IMR-90 (cell line): ENCODE measurements at regions of chr7 and their contacts with region 1.

Region 1: DNA sequence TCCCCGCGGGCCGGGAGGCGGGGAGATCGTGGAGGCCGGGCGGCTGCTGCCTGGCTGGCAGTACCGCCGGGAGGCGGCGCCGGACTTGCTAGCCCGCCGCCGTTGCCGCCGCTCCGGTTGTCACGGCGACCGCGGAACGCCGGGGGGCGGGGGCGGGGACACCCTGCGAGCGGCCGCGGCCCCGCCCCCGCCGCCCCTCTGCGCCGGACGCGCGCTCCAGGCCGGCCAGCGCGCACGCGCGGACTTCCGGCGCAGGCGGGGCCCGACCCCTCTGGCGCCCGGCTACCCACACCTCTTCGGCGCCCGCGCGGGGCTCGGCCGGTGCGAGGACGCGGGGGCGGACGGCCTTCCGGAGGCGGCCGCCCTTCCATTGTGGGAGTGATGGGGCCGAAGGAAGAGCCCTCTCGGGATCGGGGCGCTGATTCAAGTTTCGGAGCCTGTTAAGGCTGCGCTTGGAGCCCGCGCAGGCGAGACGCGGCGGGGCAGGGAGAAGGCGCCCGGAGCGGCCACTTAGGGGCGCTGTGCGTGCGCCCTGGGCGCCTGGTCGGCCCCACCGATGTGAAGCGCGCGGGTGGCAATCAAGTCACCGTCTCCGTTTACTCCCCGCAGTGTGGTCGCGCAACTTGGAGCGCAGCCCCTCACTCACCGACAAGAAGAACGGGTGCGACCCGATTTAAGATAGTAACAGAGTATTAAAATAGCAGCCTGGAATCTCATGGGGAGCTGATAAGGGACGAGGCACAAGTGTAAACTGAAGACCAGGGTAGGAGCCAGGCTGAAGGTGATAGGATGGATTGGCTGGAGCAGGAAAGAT is 448 bp upstream of the DPY19L1 start:
- DNase-seq: peak; percentile 94
- ATAC-seq: peak; percentile 93
- H3K4me3 ChIP-seq: peak overlapping the region; percentile 87
- H3K27ac ChIP-seq: peak overlapping the region; percentile 72
- H3K4me1 ChIP-seq: peaks cover 2% of the 10 kb centered on the region; the same call in 1 of the 2 replicates
- H3K27me3 ChIP-seq: peaks cover 4% of the 10 kb centered on the region; the same call in 1 of the 2 replicates
- CTCF ChIP-seq: peak; percentile 85
- POLR2A ChIP-seq: 0 out of 2 replicates have a peak, but pooled peaks have one; percentile 36
- RAD21 ChIP-seq: peak; percentile 61

Region 2: GRCh38 chr7:34315032-34315431 is 722.7 kb before region 1 on chr7:
- CTCF ChIA-PET with region 1: no interaction called
- POLR2A ChIA-PET with region 1: no interaction called
- dilution Hi-C with region 1: no loop called
- in situ Hi-C with region 1: no loop called
- intact Hi-C with region 1: loop called (anchors 10 kb)
- DNase-seq: peak; percentile 83
- ATAC-seq: peak; percentile 78
- H3K4me3 ChIP-seq: no peak overlapping the region
- H3K27ac ChIP-seq: peak overlapping the region; percentile 43; the same call in 1 of the 2 replicates
- H3K4me1 ChIP-seq: peaks cover 7% of the 10 kb centered on the region; the same call in 1 of the 2 replicates
- H3K27me3 ChIP-seq: no peaks in the 10 kb centered on the region
- CTCF ChIP-seq: no peak
- POLR2A ChIP-seq: no peak
- RAD21 ChIP-seq: no peak

Region 3: DNA sequence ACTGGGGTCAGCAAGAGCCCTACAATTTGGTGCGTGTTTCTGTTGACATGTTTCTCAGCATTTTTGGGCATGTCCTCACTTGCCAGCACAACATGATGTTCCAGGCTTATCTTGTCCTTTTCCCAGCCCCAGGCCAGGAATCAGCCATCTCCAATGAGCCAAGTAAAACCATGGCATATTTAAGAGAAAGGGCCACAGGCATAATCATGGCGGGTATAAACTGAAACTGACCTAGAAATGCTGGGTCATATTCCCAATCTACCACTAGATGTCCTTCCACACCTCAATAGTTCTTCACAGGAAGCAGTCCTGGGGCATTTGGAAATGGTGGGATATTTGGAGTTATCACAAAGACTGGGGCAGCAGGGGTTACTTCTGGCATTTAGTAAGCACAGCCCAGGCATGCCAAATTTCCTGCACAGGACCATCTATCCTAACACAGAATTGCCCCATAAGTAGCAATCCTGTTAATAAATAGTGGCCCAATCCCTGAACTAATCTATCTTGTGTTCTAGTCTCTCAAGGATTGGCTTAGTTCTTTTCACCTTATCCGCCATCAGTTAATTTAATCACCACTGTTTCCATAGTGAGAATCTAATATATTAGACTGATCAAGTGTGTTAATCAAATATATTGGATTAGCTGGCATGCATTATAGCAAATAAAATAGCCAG is 278.1 kb before region 1 on chr7:
- CTCF ChIA-PET with region 1: no interaction called
- POLR2A ChIA-PET with region 1: no interaction called
- dilution Hi-C with region 1: no loop called
- in situ Hi-C with region 1: no loop called
- intact Hi-C with region 1: loop called (anchors 5 kb)
- DNase-seq: peak; percentile 45
- ATAC-seq: peak; percentile 88
- H3K4me3 ChIP-seq: no peak overlapping the region
- H3K27ac ChIP-seq: no peak overlapping the region
- H3K4me1 ChIP-seq: no peaks in the 10 kb centered on the region
- H3K27me3 ChIP-seq: no peaks in the 10 kb centered on the region
- CTCF ChIP-seq: peak; percentile 57
- POLR2A ChIP-seq: no peak
- RAD21 ChIP-seq: peak; percentile 44

Region 4: GRCh38 chr7:34823640-34824258 is 214.0 kb before region 1 on chr7:
- CTCF ChIA-PET with region 1: interaction called, 4 read pairs
- POLR2A ChIA-PET with region 1: interaction called, 8 read pairs
- dilution Hi-C with region 1: no loop called
- in situ Hi-C with region 1: no loop called
- intact Hi-C with region 1: loop called (anchors 1 kb)
- DNase-seq: peak; percentile 46
- ATAC-seq: peak; percentile 82
- H3K4me3 ChIP-seq: no peak overlapping the region
- H3K27ac ChIP-seq: no peak overlapping the region
- H3K4me1 ChIP-seq: no peaks in the 10 kb centered on the region
- H3K27me3 ChIP-seq: no peaks in the 10 kb centered on the region; the same call in 1 of the 2 replicates
- CTCF ChIP-seq: peak; percentile 80
- POLR2A ChIP-seq: no peak
- RAD21 ChIP-seq: peak; percentile 69

Region 5: GRCh38 chr7:34939175-34939574 is 98.6 kb before region 1 on chr7:
- CTCF ChIA-PET with region 1: interaction called, 3 read pairs
- POLR2A ChIA-PET with region 1: no interaction called
- dilution Hi-C with region 1: no loop called
- in situ Hi-C with region 1: no loop called
- intact Hi-C with region 1: loop called (anchors 5 kb)
- DNase-seq: peak; percentile 94
- ATAC-seq: peak; percentile 94
- H3K4me3 ChIP-seq: no peak overlapping the region
- H3K27ac ChIP-seq: no peak overlapping the region
- H3K4me1 ChIP-seq: peaks cover 1% of the 10 kb centered on the region; the same call in 1 of the 2 replicates
- H3K27me3 ChIP-seq: no peaks in the 10 kb centered on the region
- CTCF ChIP-seq: no peak
- POLR2A ChIP-seq: no peak
- RAD21 ChIP-seq: no peak

Region 6: DNA sequence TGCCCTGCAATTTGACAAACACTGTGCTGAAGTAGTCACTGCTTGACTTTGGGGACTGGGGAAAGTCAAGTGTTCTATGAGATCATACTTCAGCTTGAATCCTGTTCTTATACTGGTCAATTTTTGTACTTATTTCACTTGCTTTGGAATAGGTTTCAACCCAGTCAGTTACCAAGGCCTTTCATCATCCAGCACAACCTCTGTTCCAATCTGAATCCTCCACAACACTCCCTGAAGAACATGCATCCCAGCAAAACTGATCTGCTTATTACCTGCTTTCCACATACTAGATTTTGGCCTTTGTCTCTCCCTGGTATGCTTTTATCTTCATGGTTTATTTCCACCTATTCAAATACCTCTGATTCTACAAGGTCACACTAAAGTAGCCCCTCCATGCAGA is 30.0 kb before region 1 on chr7:
- CTCF ChIA-PET with region 1: no interaction called
- POLR2A ChIA-PET with region 1: no interaction called
- dilution Hi-C with region 1: no loop called
- in situ Hi-C with region 1: no loop called
- intact Hi-C with region 1: no loop called
- DNase-seq: no peak
- ATAC-seq: no peak
- H3K4me3 ChIP-seq: no peak overlapping the region
- H3K27ac ChIP-seq: no peak overlapping the region
- H3K4me1 ChIP-seq: peaks cover 10% of the 10 kb centered on the region
- H3K27me3 ChIP-seq: no peaks in the 10 kb centered on the region
- CTCF ChIP-seq: no peak
- POLR2A ChIP-seq: no peak
- RAD21 ChIP-seq: no peak